Naive thymus-derived CD8-positive, alpha-beta T cell (primary cell): ENCODE measurements at regions of chr11 and their contacts with region 1.

Region 1: GRCh38 chr11:5689551-5689983 is at the start of gene TRIM22:
- DNase-seq: peak; percentile 16 to 75 (median 40)
- ATAC-seq: peak; percentile 52 to 63
- H3K4me3 Mint-ChIP-seq: peak within 1 kb of the TSS; percentile 92 to 97 (median 94)
- H3K27ac Mint-ChIP-seq: peak within 1 kb of the TSS; percentile 91 to 98 (median 96)
- H3K4me1 Mint-ChIP-seq: peaks cover 32 to 68% (median 58%) of the 10 kb centered on the region in 4 donors
- H3K27me3 Mint-ChIP-seq: no peaks in the 10 kb centered on the region
- polyA plus RNA-seq, gene TRIM22: 108 to 143 (median 114) TPM

Region 2: DNA sequence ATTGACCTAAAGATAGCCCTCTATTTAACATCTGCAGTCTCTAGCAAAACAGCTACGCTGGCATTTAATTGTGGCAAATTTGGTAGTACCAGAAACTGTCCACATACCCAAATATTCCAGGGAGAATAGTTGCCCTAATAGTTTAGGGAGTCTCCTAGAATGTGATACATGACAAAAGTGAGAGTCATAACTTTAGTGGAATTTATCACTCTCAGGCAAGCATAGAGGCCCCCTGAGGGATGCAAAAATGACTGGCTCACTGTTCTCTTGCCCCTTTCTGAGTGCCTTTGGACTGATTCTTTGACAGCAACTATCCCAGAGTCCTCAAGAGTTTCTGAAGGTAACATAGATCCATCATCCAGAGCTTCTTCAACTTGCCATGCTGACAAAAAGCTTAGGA is 385.5 kb before region 1 on chr11:
- POLR2A ChIA-PET with region 1: no interaction called
- DNase-seq: no peak
- ATAC-seq: no peak
- H3K4me3 Mint-ChIP-seq: no peak overlapping the region
- H3K27ac Mint-ChIP-seq: no peak overlapping the region
- H3K4me1 Mint-ChIP-seq: no peaks in the 10 kb centered on the region
- H3K27me3 Mint-ChIP-seq: peaks cover 0 to 17% (median 0%) of the 10 kb centered on the region in 5 donors

Region 3: DNA sequence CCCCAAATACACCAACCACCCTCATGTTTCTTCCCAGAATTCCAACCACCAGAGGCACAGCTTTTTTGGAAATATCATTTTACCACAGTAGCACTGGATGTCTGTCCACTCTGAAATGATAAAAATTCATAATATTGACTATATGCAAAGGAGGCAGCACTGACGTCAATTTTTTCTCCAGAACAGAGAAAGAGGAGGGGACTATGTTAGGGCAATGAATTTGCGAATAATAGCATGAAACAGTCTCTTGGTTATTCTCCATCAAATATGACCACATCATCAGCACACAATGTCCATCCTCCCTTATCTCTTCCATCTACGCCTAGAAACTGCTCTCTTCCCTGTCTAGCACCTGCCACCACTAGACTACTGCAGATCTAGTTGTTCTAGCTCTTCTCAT is 43.4 kb before region 1 on chr11:
- POLR2A ChIA-PET with region 1: no interaction called
- DNase-seq: no peak
- ATAC-seq: no peak
- H3K4me3 Mint-ChIP-seq: no peak overlapping the region
- H3K27ac Mint-ChIP-seq: peak overlapping the region in 1 of 10 donors; percentile 20
- H3K4me1 Mint-ChIP-seq: no peaks in the 10 kb centered on the region
- H3K27me3 Mint-ChIP-seq: no peaks in the 10 kb centered on the region

Region 4: DNA sequence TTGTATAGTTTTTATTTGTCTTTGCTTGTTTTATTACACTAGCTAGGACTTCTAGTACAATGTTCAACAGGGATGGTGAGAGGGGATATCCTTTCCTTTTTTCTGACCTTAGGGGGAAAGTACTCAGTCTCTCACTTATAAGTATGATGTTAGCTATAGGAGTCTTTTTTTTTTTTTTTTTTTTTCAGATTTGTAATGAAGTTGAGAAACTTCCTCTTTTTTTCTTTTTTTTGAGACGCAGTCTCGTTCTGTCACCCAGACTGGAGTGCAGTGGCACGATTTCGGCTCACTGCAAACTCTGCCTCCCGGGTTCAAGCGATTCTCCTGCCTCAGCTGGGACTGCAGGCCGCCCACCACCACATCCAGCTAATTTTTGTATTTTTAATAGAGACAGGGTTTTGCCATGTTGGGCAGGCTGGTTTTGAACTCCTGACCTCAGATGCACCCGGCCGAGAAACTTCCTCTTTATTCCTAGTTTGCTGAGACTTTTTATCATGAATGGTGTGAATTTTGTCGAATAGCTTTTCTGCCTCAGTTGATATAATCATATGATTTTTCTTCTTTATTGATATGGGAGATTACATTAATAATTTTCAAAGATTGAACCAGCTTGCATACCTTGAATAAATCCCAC is 11.0 kb after region 1 on chr11:
- POLR2A ChIA-PET with region 1: interaction called, 24 read pairs
- DNase-seq: no peak
- ATAC-seq: no peak
- H3K4me3 Mint-ChIP-seq: peak overlapping the region in 6 of 10 donors; percentile 0 to 68 (median 26)
- H3K27ac Mint-ChIP-seq: peak overlapping the region in 7 of 10 donors; percentile 22 to 82 (median 58)
- H3K4me1 Mint-ChIP-seq: peaks cover 22 to 84% (median 70%) of the 10 kb centered on the region in 4 donors
- H3K27me3 Mint-ChIP-seq: no peaks in the 10 kb centered on the region